GM12878 (cell line): ENCODE measurements at regions of chr6 and their contacts with region 1.

Region 1: GRCh38 chr6:37826188-37826587 is 6.7 kb downstream of the ZFAND3 start:
- DNase-seq: no peak
- ATAC-seq: no peak
- H3K4me3 ChIP-seq: no peak overlapping the region
- H3K27ac ChIP-seq: no peak overlapping the region
- H3K4me1 ChIP-seq: peaks cover 10% of the 10 kb centered on the region
- H3K27me3 ChIP-seq: no peaks in the 10 kb centered on the region
- CTCF ChIP-seq: no peak
- EP300 ChIP-seq: no peak
- POLR2A ChIP-seq: no peak
- RAD21 ChIP-seq: no peak

Region 2: DNA sequence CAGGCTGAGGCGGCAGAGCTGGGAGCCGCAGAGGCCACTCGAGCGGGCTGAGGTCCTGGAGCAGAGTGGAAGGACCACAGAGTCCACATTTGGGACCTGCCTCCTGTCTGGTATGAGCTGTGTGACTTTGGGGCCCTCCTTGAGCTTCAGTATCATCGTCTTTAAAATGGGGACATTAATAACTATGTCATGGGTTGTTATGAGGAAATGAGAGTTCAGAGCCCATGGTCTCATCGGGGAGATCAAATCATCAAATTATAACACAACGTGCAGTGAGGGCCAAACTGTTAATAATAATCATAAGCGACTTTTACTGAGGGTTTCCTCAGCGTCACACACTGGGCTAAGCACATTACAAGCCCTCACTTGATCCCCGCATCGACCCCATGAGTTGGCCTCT is 276.6 kb before region 1 on chr6:
- CTCF ChIA-PET with region 1: no interaction called
- POLR2A ChIA-PET with region 1: no interaction called
- RAD21 ChIA-PET with region 1: no interaction called
- SMC1A ChIA-PET with region 1: no interaction called
- in situ Hi-C with region 1: no loop called
- intact Hi-C with region 1: no loop called
- DNase-seq: no peak
- ATAC-seq: peak; percentile 12
- H3K4me3 ChIP-seq: no peak overlapping the region
- H3K27ac ChIP-seq: peak overlapping the region; percentile 83
- H3K4me1 ChIP-seq: peaks cover 75% of the 10 kb centered on the region
- H3K27me3 ChIP-seq: no peaks in the 10 kb centered on the region
- CTCF ChIP-seq: no peak
- EP300 ChIP-seq: no peak
- POLR2A ChIP-seq: no peak
- RAD21 ChIP-seq: no peak

Region 3: DNA sequence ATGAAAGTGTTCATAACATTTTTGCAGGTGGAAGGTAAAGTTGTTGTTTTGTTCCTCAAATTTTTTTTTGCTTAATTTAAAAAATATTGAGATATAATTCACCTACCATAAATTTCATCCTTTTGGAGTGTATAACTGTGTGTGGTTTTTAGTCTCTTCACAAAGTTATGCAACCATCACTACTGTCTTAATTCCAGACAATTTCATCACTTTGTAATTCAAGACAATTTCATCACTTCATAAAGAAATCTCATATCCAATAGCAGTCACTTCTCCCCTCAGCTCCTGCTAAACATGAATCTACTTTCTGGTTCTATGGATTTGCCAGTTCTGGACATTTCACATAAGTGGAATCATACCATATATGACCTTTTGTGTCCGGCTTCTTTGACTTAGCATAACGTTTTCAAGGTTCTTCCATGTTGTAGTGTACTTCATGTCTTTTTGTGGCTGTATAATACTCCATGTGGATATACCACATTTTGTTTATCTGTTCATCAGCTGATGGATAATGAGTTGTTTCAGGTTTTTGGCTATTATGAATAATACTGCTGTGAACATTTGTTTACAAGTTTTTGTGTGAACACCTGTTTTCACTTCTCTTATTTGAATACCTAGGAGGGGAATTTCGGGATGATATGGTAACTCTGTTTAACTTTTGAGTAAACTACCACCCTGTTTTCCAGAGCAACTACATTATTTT is 12.2 kb after region 1 on chr6:
- CTCF ChIA-PET with region 1: interaction called, 6 read pairs
- POLR2A ChIA-PET with region 1: interaction called, 9 read pairs
- RAD21 ChIA-PET with region 1: interaction called, 6 read pairs
- SMC1A ChIA-PET with region 1: interaction called, 28 read pairs
- in situ Hi-C with region 1: no loop called
- intact Hi-C with region 1: no loop called
- DNase-seq: no peak
- ATAC-seq: peak; percentile 26
- H3K4me3 ChIP-seq: no peak overlapping the region
- H3K27ac ChIP-seq: peak overlapping the region; percentile 48; the same call in 1 of the 2 replicates
- H3K4me1 ChIP-seq: peaks cover 15% of the 10 kb centered on the region
- H3K27me3 ChIP-seq: no peaks in the 10 kb centered on the region
- CTCF ChIP-seq: no peak
- EP300 ChIP-seq: no peak
- POLR2A ChIP-seq: no peak
- RAD21 ChIP-seq: no peak

Region 4: DNA sequence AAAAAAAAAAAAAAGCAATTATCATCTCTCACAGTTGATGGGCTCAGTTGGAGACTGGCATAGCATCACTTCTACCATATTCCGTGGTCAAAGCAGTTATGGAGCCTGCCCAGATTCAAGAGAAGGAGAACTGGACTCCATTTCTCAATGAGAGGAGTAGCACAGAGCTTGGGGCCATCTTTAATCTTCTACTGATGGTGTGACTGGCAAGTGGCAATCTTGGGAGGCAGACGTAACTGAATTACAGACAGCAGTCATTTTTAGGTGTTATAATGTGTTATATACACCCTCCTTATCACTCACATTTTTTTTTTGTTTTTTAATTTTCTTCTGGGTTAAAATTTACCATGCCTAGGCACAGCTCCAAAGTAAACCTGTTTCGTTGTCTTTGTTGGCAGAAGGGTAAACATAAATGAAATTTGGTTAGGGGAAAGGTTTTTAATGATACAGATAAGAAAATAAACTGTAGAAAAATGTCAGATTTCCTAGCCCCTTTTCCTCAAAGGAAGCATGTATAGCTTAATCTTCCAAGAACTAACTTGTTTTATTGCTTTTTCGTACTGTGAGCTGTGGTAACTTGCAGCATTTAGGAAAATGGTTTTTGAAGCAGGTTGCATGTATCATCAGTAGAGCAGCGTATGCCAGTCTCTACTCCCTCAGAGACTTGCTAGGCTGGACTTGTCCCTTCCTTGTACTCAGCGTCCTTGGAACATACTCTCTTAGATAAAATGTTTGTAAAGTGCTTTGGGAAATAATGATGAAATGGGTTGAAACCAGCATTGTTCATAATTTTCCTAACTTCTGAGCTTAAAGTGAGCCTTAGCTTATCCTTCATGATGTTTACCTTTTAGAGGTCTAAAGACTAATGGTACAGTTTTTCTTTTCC is 19.1 kb after region 1 on chr6:
- CTCF ChIA-PET with region 1: interaction called, 6 read pairs
- POLR2A ChIA-PET with region 1: interaction called, 9 read pairs
- RAD21 ChIA-PET with region 1: interaction called, 8 read pairs
- SMC1A ChIA-PET with region 1: interaction called, 28 read pairs
- in situ Hi-C with region 1: no loop called
- intact Hi-C with region 1: no loop called
- DNase-seq: no peak
- ATAC-seq: no peak
- H3K4me3 ChIP-seq: no peak overlapping the region
- H3K27ac ChIP-seq: no peak overlapping the region
- H3K4me1 ChIP-seq: peaks cover 4% of the 10 kb centered on the region
- H3K27me3 ChIP-seq: no peaks in the 10 kb centered on the region
- CTCF ChIP-seq: no peak
- EP300 ChIP-seq: no peak
- POLR2A ChIP-seq: no peak
- RAD21 ChIP-seq: no peak

Region 5: DNA sequence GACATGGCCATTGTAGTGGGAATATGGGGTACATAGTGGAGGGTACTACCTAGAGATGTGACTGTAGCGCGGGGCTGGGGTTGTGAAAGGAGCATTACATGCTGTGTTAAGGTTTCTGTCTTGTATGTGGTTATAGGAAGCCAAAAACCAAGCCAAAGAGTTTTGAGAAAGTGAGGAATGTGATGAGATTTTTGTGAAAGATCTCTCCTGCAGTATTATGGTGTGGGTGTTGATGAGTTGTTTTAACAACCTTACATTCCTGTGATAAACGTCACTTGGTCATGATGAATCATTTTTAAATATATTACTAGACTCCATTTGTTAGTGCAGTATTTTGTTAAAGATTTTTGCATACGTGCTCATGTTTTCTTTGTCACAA is 42.2 kb after region 1 on chr6:
- CTCF ChIA-PET with region 1: interaction called, 4 read pairs
- POLR2A ChIA-PET with region 1: interaction called, 4 read pairs
- RAD21 ChIA-PET with region 1: interaction called, 10 read pairs
- SMC1A ChIA-PET with region 1: interaction called, 6 read pairs
- in situ Hi-C with region 1: no loop called
- intact Hi-C with region 1: loop called (anchors 5 kb)
- DNase-seq: no peak
- ATAC-seq: peak; percentile 12; the same call in 2 of the 3 replicates
- H3K4me3 ChIP-seq: no peak overlapping the region
- H3K27ac ChIP-seq: peak overlapping the region; percentile 37
- H3K4me1 ChIP-seq: peaks cover 28% of the 10 kb centered on the region
- H3K27me3 ChIP-seq: no peaks in the 10 kb centered on the region
- CTCF ChIP-seq: no peak
- EP300 ChIP-seq: no peak
- POLR2A ChIP-seq: no peak
- RAD21 ChIP-seq: no peak

Region 6: DNA sequence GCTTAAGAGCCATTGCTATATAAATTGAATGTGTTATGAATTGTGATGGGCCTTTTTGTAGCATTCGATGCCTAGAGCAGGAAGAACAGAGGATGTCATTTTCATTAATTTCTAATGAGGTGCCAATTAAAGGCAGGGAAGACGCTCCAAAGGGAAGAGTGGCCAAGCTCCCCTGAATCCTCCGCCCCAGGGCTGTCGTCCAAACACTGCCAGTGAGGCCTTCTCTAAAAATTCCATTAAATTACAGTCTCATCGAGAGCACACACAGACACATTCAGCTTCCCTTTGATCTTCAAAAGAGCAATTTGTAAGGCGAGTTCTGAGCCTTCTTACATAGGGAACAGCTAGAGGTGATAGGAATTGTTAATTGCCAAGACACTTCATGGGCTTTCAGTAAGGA is 293.3 kb after region 1 on chr6:
- CTCF ChIA-PET with region 1: no interaction called
- POLR2A ChIA-PET with region 1: no interaction called
- RAD21 ChIA-PET with region 1: no interaction called
- SMC1A ChIA-PET with region 1: no interaction called
- in situ Hi-C with region 1: no loop called
- intact Hi-C with region 1: no loop called
- DNase-seq: no peak
- ATAC-seq: no peak
- H3K4me3 ChIP-seq: no peak overlapping the region
- H3K27ac ChIP-seq: no peak overlapping the region
- H3K4me1 ChIP-seq: no peaks in the 10 kb centered on the region
- H3K27me3 ChIP-seq: no peaks in the 10 kb centered on the region
- CTCF ChIP-seq: no peak
- EP300 ChIP-seq: no peak
- POLR2A ChIP-seq: no peak
- RAD21 ChIP-seq: no peak